CD8-positive, alpha-beta T cell (primary cell): ENCODE measurements at regions of chr12 and their contacts with region 1.

Region 1: GRCh38 chr12:65169320-65170208 is at the start of gene LEMD3:
- DNase-seq: peak; percentile 87 to 98 (median 94)
- ATAC-seq: peak; percentile 87
- H3K4me3 ChIP-seq: peak within 1 kb of the TSS; percentile 82 to 91
- H3K4me3 Mint-ChIP-seq: peak within 1 kb of the TSS; percentile 99
- H3K27ac ChIP-seq: peak within 1 kb of the TSS; percentile 83 to 94
- H3K27ac Mint-ChIP-seq: peak within 1 kb of the TSS; percentile 100
- H3K4me1 ChIP-seq: peaks cover 37% of the 10 kb centered on the region
- H3K4me1 Mint-ChIP-seq: peaks cover 45% of the 10 kb centered on the region
- H3K27me3 ChIP-seq: no peaks in the 10 kb centered on the region
- H3K27me3 Mint-ChIP-seq: no peaks in the 10 kb centered on the region
- CTCF ChIP-seq: no peak
- total RNA-seq, gene LEMD3: 75.2 to 77.9 TPM

Region 2: DNA sequence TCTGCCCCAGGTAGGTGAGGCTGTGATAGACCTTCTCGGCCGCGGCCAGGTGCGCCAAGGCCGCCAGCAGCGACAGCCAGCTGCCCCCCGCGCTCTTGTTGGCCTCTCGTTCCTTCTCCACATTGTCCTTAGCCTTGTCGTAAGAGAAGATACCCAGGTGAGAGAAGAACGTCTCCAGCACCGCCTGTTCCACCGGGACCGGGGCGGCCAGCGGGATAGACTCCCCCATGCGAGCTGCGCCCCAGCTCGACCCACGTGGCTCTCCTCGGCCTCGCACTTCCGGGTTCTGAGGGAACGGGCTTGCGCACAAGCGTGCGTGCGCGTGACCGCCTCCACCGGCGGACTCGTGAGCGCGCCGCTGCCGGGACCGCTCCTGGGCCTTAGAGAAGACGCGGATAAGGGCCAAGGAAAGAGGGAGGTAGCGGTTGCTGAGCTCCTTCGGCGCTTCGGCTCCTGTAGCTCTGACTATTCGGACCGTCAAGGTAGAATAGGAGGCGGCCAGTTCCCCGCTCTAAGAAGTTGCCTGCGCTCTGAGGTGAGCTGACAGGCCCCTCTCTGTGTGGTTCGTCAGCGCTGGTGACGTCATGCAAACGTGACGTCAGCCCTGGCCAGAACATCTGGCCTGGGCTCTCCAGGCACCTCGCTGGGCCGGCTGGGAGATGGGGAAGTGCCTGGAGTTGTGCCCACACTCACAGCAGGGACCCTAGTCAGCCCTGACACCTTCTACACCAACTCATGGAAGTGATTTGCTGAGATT is 947.4 kb before region 1 on chr12 and contains the start of gene KICS2:
- CTCF ChIA-PET with region 1: no interaction called
- POLR2A ChIA-PET with region 1: no interaction called
- intact Hi-C with region 1: loop called in 1 of 2 experiments (anchors 10 kb)
- DNase-seq: peak; percentile 82 to 97 (median 90)
- ATAC-seq: peak; percentile 82
- H3K4me3 ChIP-seq: peak within 1 kb of the TSS; percentile 67 to 94
- H3K4me3 Mint-ChIP-seq: peak within 1 kb of the TSS; percentile 93
- H3K27ac ChIP-seq: peak within 1 kb of the TSS; percentile 95 to 97
- H3K27ac Mint-ChIP-seq: peak within 1 kb of the TSS; percentile 98
- H3K4me1 ChIP-seq: peaks cover 12% of the 10 kb centered on the region
- H3K4me1 Mint-ChIP-seq: peaks cover 39% of the 10 kb centered on the region
- H3K27me3 ChIP-seq: no peaks in the 10 kb centered on the region
- H3K27me3 Mint-ChIP-seq: peaks cover 8% of the 10 kb centered on the region
- CTCF ChIP-seq: no peak
- total RNA-seq, gene KICS2: 13.9 to 15.5 TPM

Region 3: DNA sequence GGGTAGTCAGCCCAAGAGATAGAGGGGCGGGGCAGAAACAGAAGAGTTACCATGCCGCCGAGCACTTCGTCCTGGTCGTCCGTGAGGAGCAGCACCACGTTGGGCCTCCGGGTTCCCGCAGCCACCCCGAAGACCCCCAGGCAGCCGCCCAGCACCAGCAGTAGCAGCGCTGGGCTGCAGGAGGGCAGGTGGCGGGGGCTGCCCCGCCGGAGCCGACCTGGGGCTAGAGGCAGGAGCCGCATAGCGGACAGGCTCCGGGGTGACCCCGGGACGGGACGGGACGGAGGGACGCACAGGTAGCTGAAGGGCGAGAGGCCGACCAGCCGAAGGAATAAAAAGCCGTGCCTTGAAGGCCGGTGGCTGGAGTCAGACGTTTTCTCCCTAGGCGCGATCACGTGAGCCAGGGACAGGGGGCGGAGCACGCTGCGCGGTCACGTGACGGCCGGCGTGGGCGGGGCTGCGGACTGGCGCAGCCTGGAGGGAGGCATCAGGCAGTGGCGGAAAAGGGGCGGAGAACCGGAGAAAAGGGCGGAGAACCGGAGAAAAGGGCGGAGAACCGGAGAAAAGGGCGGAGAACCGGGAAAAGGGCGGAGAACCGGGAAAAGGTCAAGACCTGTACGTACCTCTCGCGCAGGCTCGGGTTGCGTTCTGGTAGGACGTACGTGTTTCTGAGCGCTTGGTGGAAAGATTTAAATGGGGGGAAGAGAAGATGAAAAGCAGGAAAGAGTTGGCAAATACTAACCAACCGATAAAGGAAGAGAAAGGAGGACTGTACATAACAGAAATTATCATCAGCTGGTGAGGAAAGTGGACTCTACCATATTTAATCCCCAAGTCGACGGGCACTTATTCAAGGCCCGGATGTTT is 410.3 kb before region 1 on chr12 and contains the start of gene GNS:
- CTCF ChIA-PET with region 1: no interaction called
- POLR2A ChIA-PET with region 1: no interaction called
- intact Hi-C with region 1: loop called (anchors 5 to 10 kb)
- DNase-seq: peak; percentile 81 to 95 (median 92)
- ATAC-seq: peak; percentile 86
- H3K4me3 ChIP-seq: peak within 1 kb of the TSS; percentile 70 to 80
- H3K4me3 Mint-ChIP-seq: peak within 1 kb of the TSS; percentile 97
- H3K27ac ChIP-seq: peak within 1 kb of the TSS; percentile 44 to 80
- H3K27ac Mint-ChIP-seq: peak within 1 kb of the TSS; percentile 93
- H3K4me1 ChIP-seq: peaks cover 24% of the 10 kb centered on the region
- H3K4me1 Mint-ChIP-seq: peaks cover 57% of the 10 kb centered on the region
- H3K27me3 ChIP-seq: no peaks in the 10 kb centered on the region
- H3K27me3 Mint-ChIP-seq: no peaks in the 10 kb centered on the region
- CTCF ChIP-seq: no peak
- total RNA-seq, gene GNS: 6.3 to 7.7 TPM

Region 4: DNA sequence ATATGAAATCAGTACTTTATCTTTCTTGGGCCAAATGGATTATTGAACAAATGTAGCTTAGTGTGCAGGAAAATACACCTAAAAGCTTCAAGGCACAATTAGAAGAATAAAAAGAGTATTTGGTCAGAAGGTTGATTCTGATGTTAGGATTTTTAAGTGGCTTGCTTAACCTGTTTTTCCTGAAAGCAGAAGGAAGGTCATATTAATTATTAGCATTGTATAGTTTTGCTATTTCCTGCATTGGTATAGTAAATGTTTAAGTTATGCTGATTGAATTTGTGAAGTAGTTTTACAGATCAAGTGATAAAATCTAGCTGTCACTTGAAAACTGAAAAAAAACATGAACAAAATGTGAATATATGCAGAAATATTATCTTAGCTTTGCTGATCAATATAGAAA is 379.3 kb before region 1 on chr12:
- CTCF ChIA-PET with region 1: no interaction called
- POLR2A ChIA-PET with region 1: no interaction called
- intact Hi-C with region 1: no loop called
- DNase-seq: no peak
- ATAC-seq: no peak
- H3K4me3 ChIP-seq: no peak overlapping the region
- H3K4me3 Mint-ChIP-seq: no peak overlapping the region
- H3K27ac ChIP-seq: no peak overlapping the region
- H3K27ac Mint-ChIP-seq: no peak overlapping the region
- H3K4me1 ChIP-seq: no peaks in the 10 kb centered on the region
- H3K4me1 Mint-ChIP-seq: no peaks in the 10 kb centered on the region
- H3K27me3 ChIP-seq: no peaks in the 10 kb centered on the region
- H3K27me3 Mint-ChIP-seq: peaks cover 8% of the 10 kb centered on the region
- CTCF ChIP-seq: no peak

Region 5: GRCh38 chr12:65195387-65196055 is 26.0 kb after region 1 on chr12:
- CTCF ChIA-PET with region 1: interaction called, 4 read pairs
- POLR2A ChIA-PET with region 1: interaction called, 11 read pairs
- intact Hi-C with region 1: no loop called
- DNase-seq: no peak
- ATAC-seq: no peak
- H3K4me3 ChIP-seq: no peak overlapping the region
- H3K4me3 Mint-ChIP-seq: no peak overlapping the region
- H3K27ac ChIP-seq: no peak overlapping the region
- H3K27ac Mint-ChIP-seq: no peak overlapping the region
- H3K4me1 ChIP-seq: peaks cover 10% of the 10 kb centered on the region
- H3K4me1 Mint-ChIP-seq: peaks cover 66% of the 10 kb centered on the region
- H3K27me3 ChIP-seq: no peaks in the 10 kb centered on the region
- H3K27me3 Mint-ChIP-seq: no peaks in the 10 kb centered on the region
- CTCF ChIP-seq: no peak

Region 6: GRCh38 chr12:65232476-65233077 is 63.0 kb after region 1 on chr12:
- CTCF ChIA-PET with region 1: interaction called, 6 read pairs
- POLR2A ChIA-PET with region 1: interaction called, 6 read pairs
- intact Hi-C with region 1: loop called (anchors 2 kb)
- DNase-seq: peak in 2 of 9 experiments; percentile 28 to 53
- ATAC-seq: peak; percentile 40
- H3K4me3 ChIP-seq: no peak overlapping the region
- H3K4me3 Mint-ChIP-seq: peak overlapping the region; percentile 40
- H3K27ac ChIP-seq: no peak overlapping the region
- H3K27ac Mint-ChIP-seq: no peak overlapping the region
- H3K4me1 ChIP-seq: peaks cover 4% of the 10 kb centered on the region
- H3K4me1 Mint-ChIP-seq: peaks cover 13% of the 10 kb centered on the region
- H3K27me3 ChIP-seq: no peaks in the 10 kb centered on the region
- H3K27me3 Mint-ChIP-seq: no peaks in the 10 kb centered on the region
- CTCF ChIP-seq: peak; percentile 69

Region 7: DNA sequence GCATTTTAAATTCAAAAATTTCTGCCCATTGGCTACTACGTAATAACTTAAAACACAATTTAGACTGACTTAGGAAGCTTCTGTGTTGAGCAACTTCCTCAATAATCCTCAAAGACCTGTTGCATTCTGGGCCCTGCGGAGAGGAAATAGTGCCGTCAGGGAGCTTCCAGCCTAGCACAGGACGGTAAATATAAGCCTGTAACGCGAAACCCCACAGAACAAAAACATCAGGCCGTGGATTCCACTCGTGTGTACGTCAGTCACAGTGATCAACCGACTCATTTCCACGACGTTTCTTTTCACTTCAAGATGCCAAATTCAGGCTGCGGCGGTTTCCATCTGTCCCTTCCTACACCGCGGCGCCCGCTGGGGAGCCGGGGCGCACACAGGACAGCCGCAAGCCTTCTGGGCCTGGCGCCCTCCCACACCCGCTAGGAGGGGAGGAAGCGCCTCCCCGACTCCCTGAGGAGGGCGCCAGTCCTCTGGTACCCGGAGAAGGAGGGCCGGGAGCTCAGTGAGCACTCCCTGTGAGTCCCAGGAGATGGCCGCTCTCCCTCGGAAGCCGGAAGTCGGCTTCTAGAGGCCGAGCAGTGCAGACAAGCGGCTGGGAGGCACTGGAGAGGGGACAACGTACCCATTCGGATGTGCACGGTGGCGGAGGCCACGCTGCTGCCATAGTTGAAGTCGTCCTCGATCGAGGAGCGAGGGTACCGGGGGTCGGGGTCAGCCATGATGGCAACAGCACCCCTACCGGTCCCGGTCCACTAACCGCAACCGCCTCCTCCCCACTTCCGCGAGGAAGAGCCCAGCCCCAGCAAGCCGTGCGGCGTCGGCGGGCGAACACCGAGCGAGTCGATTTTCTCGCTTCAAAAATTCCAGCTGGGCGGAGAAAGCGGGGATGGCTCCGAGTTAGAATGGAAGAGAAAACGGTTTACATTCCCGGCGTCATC is 999.9 kb after region 1 on chr12 and contains the start of gene TMBIM4:
- CTCF ChIA-PET with region 1: no interaction called
- POLR2A ChIA-PET with region 1: interaction called, 4 read pairs
- intact Hi-C with region 1: loop called in 1 of 2 experiments (anchors 2 kb)
- DNase-seq: peak; percentile 62 to 93 (median 84)
- ATAC-seq: peak; percentile 79
- H3K4me3 ChIP-seq: peak within 1 kb of the TSS; percentile 93 to 96
- H3K4me3 Mint-ChIP-seq: peak within 1 kb of the TSS; percentile 95
- H3K27ac ChIP-seq: peak within 1 kb of the TSS; percentile 97
- H3K27ac Mint-ChIP-seq: peak within 1 kb of the TSS; percentile 99
- H3K4me1 ChIP-seq: peaks cover 17% of the 10 kb centered on the region
- H3K4me1 Mint-ChIP-seq: peaks cover 51% of the 10 kb centered on the region
- H3K27me3 ChIP-seq: no peaks in the 10 kb centered on the region
- H3K27me3 Mint-ChIP-seq: peaks cover 2% of the 10 kb centered on the region
- CTCF ChIP-seq: peak; percentile 34
- total RNA-seq, gene TMBIM4: 22.4 to 22.7 TPM